ENCODE measurements at regions of chr18 and their contacts with region 1.

Region 1: GRCh38 chr18:67515945-67516538 is 478 bp downstream of the DSEL start:
- DNase-seq: peak; percentile 50
- ATAC-seq: peak; percentile 10
- H3K4me3 Mint-ChIP-seq: peak overlapping the region; percentile 92
- H3K27ac Mint-ChIP-seq: no peak overlapping the region
- H3K4me1 Mint-ChIP-seq: peaks cover 19% of the 10 kb centered on the region
- H3K27me3 Mint-ChIP-seq: peaks cover 14% of the 10 kb centered on the region
- CTCF ChIP-seq: no peak

Region 2: GRCh38 chr18:67217551-67218166 is 298.4 kb before region 1 on chr18:
- CTCF ChIA-PET with region 1: interaction called, 4 read pairs
- POLR2A ChIA-PET with region 1: no interaction called
- intact Hi-C with region 1: loop called (anchors 5 kb)
- DNase-seq: no peak
- ATAC-seq: peak; percentile 62
- H3K4me3 Mint-ChIP-seq: no peak overlapping the region
- H3K27ac Mint-ChIP-seq: no peak overlapping the region
- H3K4me1 Mint-ChIP-seq: no peaks in the 10 kb centered on the region
- H3K27me3 Mint-ChIP-seq: no peaks in the 10 kb centered on the region
- CTCF ChIP-seq: peak; percentile 85

Region 3: GRCh38 chr18:67463829-67464228 is 52.2 kb before region 1 on chr18:
- CTCF ChIA-PET with region 1: no interaction called
- POLR2A ChIA-PET with region 1: no interaction called
- intact Hi-C with region 1: loop called (anchors 1 kb)
- DNase-seq: no peak
- ATAC-seq: no peak
- H3K4me3 Mint-ChIP-seq: no peak overlapping the region
- H3K27ac Mint-ChIP-seq: no peak overlapping the region
- H3K4me1 Mint-ChIP-seq: peaks cover 16% of the 10 kb centered on the region
- H3K27me3 Mint-ChIP-seq: no peaks in the 10 kb centered on the region
- CTCF ChIP-seq: no peak

Region 4: DNA sequence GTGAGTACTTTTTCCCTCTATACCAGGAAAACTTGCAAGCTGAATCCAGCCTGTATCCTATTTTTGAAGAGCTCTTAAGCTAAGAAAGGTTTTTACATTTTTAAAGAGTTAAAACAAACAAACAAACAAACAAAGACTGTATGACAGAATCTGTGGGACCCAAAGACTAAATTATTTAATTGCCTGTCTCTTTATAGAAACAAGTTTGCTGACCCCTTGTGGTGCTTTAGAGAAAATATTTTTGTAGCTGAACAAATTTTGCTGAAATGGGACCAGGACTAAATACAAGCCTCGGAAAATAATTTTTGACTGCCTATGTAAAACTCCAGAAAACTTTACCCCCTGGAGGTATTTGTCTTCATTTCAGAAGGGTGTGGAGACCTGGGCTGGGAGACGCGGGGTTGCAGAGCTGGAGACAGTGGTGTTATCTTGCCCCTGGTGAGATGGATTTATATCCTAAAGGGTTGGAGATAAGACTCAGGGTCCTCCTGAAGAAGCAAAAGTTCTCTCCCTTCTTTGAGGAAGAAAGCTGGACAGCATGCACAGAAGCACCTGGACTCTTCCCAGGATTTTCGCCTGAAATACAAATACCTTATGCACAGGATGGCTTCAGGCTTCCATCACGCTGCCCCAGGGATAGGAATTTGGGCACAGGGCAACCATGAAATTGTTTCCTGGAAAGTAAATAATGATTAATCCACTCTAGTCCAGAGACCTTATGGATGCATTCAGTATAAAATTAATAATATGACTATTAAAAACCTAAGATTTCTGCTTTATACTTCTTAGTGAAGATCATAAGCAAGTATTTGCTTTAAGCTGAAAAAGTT is 1144.5 kb after region 1 on chr18:
- CTCF ChIA-PET with region 1: interaction called, 16 read pairs
- POLR2A ChIA-PET with region 1: no interaction called
- intact Hi-C with region 1: loop called (anchors 1 kb)
- DNase-seq: no peak
- ATAC-seq: no peak
- H3K4me3 Mint-ChIP-seq: no peak overlapping the region
- H3K27ac Mint-ChIP-seq: no peak overlapping the region
- H3K4me1 Mint-ChIP-seq: peaks cover 3% of the 10 kb centered on the region
- H3K27me3 Mint-ChIP-seq: peaks cover 2% of the 10 kb centered on the region
- CTCF ChIP-seq: no peak

Region 5: GRCh38 chr18:68714609-68715496 is 1198.8 kb after region 1 on chr18 and contains the start of gene TMX3:
- CTCF ChIA-PET with region 1: no interaction called
- POLR2A ChIA-PET with region 1: no interaction called
- intact Hi-C with region 1: loop called (anchors 1 kb)
- DNase-seq: peak; percentile 88
- ATAC-seq: peak; percentile 99
- H3K4me3 Mint-ChIP-seq: peak within 1 kb of the TSS; percentile 95
- H3K27ac Mint-ChIP-seq: peak within 1 kb of the TSS; percentile 82
- H3K4me1 Mint-ChIP-seq: peaks cover 35% of the 10 kb centered on the region
- H3K27me3 Mint-ChIP-seq: no peaks in the 10 kb centered on the region
- CTCF ChIP-seq: no peak
- total RNA-seq, gene TMX3: 47.0 and 59.9 TPM in 2 replicates

Region 6: DNA sequence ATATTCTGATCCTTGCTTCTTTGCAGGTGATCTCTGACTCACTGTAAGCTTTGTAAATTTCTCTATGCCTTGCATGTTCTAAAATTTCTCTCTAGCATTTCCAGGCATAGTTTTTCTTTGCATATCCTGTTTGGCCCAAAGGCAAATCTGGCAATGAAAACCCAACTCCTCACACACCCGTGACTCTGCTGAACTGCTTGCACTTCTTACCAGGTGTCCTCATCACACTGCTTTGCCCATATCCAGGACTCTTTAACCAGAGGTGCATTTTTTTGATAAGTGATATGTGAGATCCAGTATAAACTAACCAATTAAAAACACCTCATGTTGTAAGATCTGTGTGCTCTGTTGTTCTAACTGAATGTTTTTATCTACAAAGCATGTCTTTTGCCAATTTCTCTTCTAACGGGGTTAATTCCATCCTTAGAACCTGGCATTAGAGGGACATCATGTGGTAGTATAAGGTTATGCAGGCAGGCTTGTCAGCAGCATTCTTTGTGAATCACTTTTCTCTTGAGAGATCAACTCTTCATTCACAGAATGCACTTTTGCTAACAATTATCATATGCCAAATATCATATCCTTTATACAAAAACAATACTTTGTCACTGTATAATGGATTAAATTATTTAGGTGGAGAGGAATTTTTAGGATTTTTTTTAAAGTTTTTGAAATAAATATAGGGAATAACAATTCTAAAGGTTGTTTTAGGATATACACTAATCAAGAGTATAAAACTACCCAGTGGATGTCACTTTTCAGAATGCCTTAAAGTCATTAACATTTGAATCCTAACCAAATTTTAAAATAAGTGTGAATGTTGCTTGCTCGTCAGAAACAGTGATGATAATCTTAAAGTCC is 1219.7 kb after region 1 on chr18:
- CTCF ChIA-PET with region 1: no interaction called
- POLR2A ChIA-PET with region 1: no interaction called
- intact Hi-C with region 1: loop called (anchors 5 kb)
- DNase-seq: no peak
- ATAC-seq: peak; percentile 49
- H3K4me3 Mint-ChIP-seq: no peak overlapping the region
- H3K27ac Mint-ChIP-seq: no peak overlapping the region
- H3K4me1 Mint-ChIP-seq: no peaks in the 10 kb centered on the region
- H3K27me3 Mint-ChIP-seq: no peaks in the 10 kb centered on the region
- CTCF ChIP-seq: no peak

Measured in activated B cell treated with CpG ODN at 0.5 μM for 24 hours (primary cell).